WTC11 (cell line): ENCODE measurements at regions of chr17 and their contacts with region 1.

Region 1: GRCh38 chr17:82022981-82023374 is at the start of gene LRRC45:
- DNase-seq: peak; percentile 100
- ATAC-seq: peak; percentile 93
- H3K4me3 Mint-ChIP-seq: peak within 1 kb of the TSS; percentile 78
- H3K27ac Mint-ChIP-seq: no peak within 1 kb of the TSS
- H3K4me1 Mint-ChIP-seq: peaks cover 11% of the 10 kb centered on the region
- H3K27me3 Mint-ChIP-seq: no peaks in the 10 kb centered on the region; the same call in 1 of the 2 replicates
- CTCF ChIP-seq: no peak
- total RNA-seq, gene LRRC45: 30.5 to 38.1 TPM (median 32.5 TPM) in 3 replicates

Region 2: DNA sequence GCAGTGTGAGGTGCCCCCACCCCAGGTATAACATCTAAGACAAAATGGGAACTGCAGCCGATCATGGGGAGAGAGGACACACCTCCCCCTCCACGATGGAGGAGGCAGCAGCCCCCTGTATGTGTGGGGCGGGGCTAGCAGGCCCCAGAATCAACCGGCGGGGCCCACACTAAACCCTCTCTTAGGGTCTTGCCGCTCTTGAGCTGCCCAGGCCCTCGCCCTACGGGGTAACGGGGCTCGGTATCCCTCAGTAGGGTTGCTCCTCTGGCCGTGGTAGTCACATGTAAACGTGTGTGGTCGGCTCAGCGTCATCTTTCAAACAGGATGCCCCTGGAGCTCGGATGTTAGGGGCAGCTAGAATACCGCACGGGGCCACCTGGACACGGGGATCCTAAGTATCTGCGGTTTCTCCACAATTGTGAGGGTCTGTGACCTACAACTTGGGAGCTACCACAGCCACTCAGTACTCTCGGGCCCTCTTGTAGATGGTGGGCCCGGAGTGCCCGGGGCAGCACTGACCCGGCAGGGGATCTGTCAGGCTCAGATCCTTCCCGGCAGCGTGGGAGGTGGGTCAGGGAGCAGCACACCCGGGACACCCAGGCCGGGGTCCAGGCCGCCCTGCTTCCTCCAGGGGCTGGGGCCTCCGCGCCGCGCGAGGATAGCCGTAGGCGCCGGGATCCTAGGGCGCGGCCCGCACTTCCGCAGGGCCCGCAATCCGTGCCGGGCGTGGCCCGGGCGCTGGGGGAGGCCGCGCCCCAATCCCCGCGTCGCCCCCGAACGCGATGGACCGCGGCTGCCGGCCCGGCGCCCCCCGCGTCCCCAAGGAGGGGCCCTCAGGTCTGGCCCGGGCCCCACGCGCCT is 152.6 kb before region 1 on chr17:
- CTCF ChIA-PET with region 1: interaction called, 11 read pairs
- POLR2A ChIA-PET with region 1: no interaction called
- DNase-seq: peak; percentile 34
- ATAC-seq: peak; percentile 4
- H3K4me3 Mint-ChIP-seq: peak overlapping the region; percentile 76
- H3K27ac Mint-ChIP-seq: peak overlapping the region; percentile 88
- H3K4me1 Mint-ChIP-seq: peaks cover 16% of the 10 kb centered on the region
- H3K27me3 Mint-ChIP-seq: no peaks in the 10 kb centered on the region; the same call in 1 of the 2 replicates
- CTCF ChIP-seq: no peak

Region 3: GRCh38 chr17:81941790-81942553 is 81.0 kb before region 1 on chr17:
- CTCF ChIA-PET with region 1: interaction called, 13 read pairs
- POLR2A ChIA-PET with region 1: interaction called, 3 read pairs
- DNase-seq: peak; percentile 68
- ATAC-seq: peak; percentile 16
- H3K4me3 Mint-ChIP-seq: peak overlapping the region; percentile 25
- H3K27ac Mint-ChIP-seq: no peak overlapping the region
- H3K4me1 Mint-ChIP-seq: peaks cover 12% of the 10 kb centered on the region; the same call in 1 of the 2 replicates
- H3K27me3 Mint-ChIP-seq: peaks cover 23% of the 10 kb centered on the region
- CTCF ChIP-seq: no peak

Region 4: GRCh38 chr17:81967533-81968395 is 55.2 kb before region 1 on chr17:
- CTCF ChIA-PET with region 1: interaction called, 56 read pairs
- POLR2A ChIA-PET with region 1: no interaction called
- DNase-seq: peak; percentile 78
- ATAC-seq: peak; percentile 57
- H3K4me3 Mint-ChIP-seq: peak overlapping the region; percentile 42
- H3K27ac Mint-ChIP-seq: no peak overlapping the region
- H3K4me1 Mint-ChIP-seq: peaks cover 11% of the 10 kb centered on the region
- H3K27me3 Mint-ChIP-seq: peaks cover 68% of the 10 kb centered on the region
- CTCF ChIP-seq: no peak

Region 5: DNA sequence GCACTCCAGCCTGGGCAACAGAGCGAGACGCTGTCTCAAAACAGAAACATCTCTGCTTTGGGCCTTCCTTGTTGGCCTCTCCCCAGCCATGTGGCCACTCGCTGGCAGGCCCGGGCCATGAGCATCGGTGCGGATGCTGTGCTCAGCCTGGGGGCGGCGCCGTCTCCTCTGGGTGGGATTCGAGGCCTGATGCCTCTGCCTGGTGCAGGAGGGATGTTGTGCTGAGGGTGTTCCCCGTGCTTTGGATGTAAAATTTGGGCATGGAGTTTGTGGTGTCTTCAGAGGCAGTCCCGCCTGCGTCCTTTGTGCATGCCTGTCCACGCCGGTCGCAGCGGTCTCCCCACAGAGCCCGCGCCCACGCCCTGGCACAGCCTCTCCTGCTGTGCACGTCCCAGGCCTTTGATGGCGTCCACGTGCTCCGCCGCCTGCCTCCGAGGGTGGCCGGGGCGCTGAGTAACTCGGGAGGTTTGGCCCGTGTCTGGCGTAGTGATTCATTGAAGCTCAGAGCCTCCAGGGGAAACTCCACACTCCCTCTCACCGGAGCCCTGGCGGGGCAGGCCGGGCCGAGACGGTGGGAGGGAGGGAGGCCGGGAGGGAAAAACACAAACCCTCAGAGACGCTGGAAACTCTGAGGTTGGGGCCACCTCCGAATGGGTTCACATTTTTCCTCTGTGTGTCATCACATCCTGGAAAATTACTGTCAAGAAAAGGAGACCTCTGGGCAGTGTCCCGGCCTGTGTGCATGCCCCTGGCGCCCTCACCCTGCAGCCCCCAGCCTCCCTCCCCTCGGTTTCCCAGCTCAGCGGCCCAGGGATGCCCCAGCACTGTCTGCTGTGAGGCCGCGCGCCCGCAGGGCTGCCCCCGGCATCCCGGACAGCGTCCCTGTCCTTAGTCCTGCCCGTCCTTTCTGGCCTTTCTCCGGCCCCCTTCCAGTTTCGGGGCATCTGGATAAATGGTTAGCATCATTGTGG is 19.3 kb before region 1 on chr17:
- CTCF ChIA-PET with region 1: interaction called, 16 read pairs
- POLR2A ChIA-PET with region 1: no interaction called
- DNase-seq: no peak
- ATAC-seq: peak; percentile 21; the same call in 1 of the 2 replicates
- H3K4me3 Mint-ChIP-seq: no peak overlapping the region
- H3K27ac Mint-ChIP-seq: no peak overlapping the region
- H3K4me1 Mint-ChIP-seq: no peaks in the 10 kb centered on the region
- H3K27me3 Mint-ChIP-seq: no peaks in the 10 kb centered on the region
- CTCF ChIP-seq: no peak

Region 6: GRCh38 chr17:82105882-82106687 is 83.1 kb after region 1 on chr17:
- CTCF ChIA-PET with region 1: interaction called, 13 read pairs
- POLR2A ChIA-PET with region 1: no interaction called
- DNase-seq: peak; percentile 77
- ATAC-seq: peak; percentile 83
- H3K4me3 Mint-ChIP-seq: no peak overlapping the region
- H3K27ac Mint-ChIP-seq: peak overlapping the region; percentile 53
- H3K4me1 Mint-ChIP-seq: peaks cover 44% of the 10 kb centered on the region
- H3K27me3 Mint-ChIP-seq: peaks cover 32% of the 10 kb centered on the region
- CTCF ChIP-seq: no peak